Heart right ventricle (tissue), 16 donors: ENCODE measurements at regions of chr19 and their contacts with region 1.

Region 1: GRCh38 chr19:19997656-19998268 is 41.5 kb downstream of the ZNF682 start:
- DNase-seq: peak; percentile 6 to 21
- ATAC-seq: no peak
- H3K4me3 ChIP-seq: no peak overlapping the region
- H3K27ac ChIP-seq: no peak overlapping the region
- H3K4me1 ChIP-seq: no peaks in the 10 kb centered on the region
- H3K27me3 ChIP-seq: no peaks in the 10 kb centered on the region
- CTCF ChIP-seq: peak; percentile 44 to 86 (median 75)

Region 2: DNA sequence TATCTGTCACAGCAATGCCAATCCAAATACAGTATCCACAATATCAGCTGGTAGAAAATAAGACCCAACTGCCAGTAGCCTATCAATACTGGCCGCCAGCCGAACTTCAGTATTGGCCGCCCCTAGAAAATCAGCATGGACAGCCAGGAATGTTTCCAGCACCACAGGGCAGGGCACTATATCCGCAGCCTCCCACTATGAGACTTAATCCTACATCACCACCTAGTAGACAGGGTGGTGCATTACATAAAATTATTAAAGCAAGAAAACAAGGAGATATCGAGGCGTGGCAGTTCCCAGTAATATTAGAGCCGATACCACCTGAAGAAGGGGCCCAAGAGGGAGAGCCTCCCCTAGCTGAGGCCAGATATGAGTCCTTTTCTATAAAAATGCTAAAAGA is 280.6 kb after region 1 on chr19:
- intact Hi-C with region 1: loop called in 2 of 10 experiments (anchors 5 to 10 kb)
- DNase-seq: no peak
- ATAC-seq: no peak
- H3K4me3 ChIP-seq: no peak overlapping the region
- H3K27ac ChIP-seq: no peak overlapping the region
- H3K4me1 ChIP-seq: no peaks in the 10 kb centered on the region
- H3K27me3 ChIP-seq: no peaks in the 10 kb centered on the region
- CTCF ChIP-seq: peak in 3 of 9 donors; percentile 42 to 58 (median 53)